Sciatic nerve (tissue), 2 donors: ENCODE measurements at regions of chr12 and their contacts with region 1.

Region 1: GRCh38 chr12:114328292-114328691 is 77.7 kb downstream of the TBX5 start:
- DNase-seq: no peak
- ATAC-seq: no peak

Region 2: DNA sequence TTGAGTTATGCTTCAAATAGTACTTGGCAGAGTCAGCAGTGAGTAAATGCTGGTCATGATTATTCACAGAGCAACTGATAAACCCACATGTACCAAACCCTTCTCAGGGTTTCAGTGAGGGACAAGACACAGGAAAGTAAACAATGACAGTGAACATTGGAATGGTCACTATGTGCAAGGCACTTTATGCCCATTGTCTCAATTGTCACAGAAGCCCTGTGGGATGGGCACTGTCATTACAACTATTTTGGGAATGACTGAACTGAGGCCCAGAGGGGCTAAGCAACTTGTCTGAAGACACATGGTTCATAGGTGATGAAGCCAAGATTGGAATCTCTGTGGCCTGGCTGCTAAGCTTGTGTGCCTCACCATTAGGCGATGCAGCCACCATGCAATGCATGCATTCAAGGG is 600.6 kb before region 1 on chr12:
- intact Hi-C with region 1: loop called (anchors 5 kb)
- DNase-seq: no peak
- ATAC-seq: no peak

Region 3: DNA sequence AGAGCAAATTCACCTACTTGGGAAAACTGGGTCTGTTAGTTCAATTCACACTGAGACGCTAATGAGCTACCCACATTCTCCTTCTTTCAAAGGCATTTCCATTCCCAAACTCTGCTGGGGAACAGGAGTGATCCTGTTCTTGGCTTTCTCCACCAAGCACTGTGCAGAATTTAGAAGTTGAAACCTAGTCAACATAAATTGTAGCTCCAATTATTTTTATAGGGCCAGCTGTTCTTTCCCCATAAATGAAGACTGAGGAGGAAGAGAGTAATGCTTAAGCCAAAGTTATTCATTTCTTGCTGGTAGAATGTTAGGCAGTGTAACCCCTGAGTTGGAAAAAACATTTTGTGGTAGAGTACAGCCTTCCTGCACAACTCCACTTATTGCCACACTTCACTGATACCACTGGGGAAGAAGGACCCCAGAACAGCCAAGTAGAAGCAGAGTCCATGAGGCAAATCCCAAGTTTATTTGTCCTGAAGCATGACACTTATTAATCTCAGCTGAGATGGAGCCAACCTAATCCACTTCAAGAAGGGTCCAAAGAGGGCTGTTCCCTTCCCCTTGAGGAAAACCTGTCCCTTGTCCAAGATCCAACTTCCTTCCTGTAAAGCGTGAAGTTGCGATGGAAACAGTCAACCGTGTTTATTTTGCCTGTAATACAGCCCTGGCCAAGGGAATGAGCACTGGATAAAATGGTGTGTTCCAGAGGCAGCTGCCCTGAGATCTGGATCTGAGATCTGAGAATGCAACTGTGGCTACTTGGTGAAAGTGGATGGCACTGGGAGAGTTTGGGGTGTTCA is 74.1 kb before region 1 on chr12:
- intact Hi-C with region 1: no loop called
- DNase-seq: no peak
- ATAC-seq: no peak

Region 4: DNA sequence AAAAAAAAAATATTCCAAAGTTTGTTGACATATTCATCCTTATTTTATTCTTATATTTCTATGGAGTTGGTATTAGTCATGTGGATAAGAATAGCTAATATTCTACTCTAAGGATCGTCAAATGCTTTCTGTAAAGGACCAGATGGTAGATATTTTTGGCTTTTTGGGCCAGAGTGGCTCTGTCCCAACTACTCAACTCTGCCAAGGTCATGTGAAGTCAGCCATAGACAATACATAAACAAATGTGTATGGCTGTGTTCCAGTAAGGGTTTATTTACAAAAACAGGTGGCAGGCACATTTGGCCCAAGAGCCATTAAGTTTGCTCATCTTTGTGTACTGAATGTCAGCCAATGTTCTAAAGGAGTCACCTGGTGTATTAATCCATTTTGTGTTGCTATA is 54.2 kb before region 1 on chr12:
- intact Hi-C with region 1: no loop called
- DNase-seq: no peak
- ATAC-seq: no peak